A549 (cell line): ENCODE measurements at regions of chr2 and their contacts with region 1.

Region 1: GRCh38 chr2:46230115-46230571 is 67.1 kb upstream of the EPAS1 start:
- DNase-seq: peak; percentile 35 to 84
- ATAC-seq: peak; percentile 85 to 90
- H3K4me3 ChIP-seq: no peak overlapping the region
- H3K27ac ChIP-seq: peak overlapping the region; percentile 93 to 95
- H3K4me1 ChIP-seq: peaks cover 62% of the 10 kb centered on the region
- CTCF ChIP-seq: peak; percentile 63
- EP300 ChIP-seq: no peak
- POLR2A ChIP-seq: no peak
- RAD21 ChIP-seq: peak; percentile 80 to 87

Region 2: GRCh38 chr2:46134531-46135181 is 95.5 kb before region 1 on chr2:
- CTCF ChIA-PET with region 1: no interaction called
- POLR2A ChIA-PET with region 1: no interaction called
- DNase-seq: no peak
- ATAC-seq: no peak
- H3K4me3 ChIP-seq: no peak overlapping the region
- H3K27ac ChIP-seq: no peak overlapping the region
- H3K4me1 ChIP-seq: peaks cover 6% of the 10 kb centered on the region; the same call in 2 of the 3 replicates
- CTCF ChIP-seq: no peak
- EP300 ChIP-seq: no peak
- POLR2A ChIP-seq: no peak
- RAD21 ChIP-seq: no peak

Region 3: DNA sequence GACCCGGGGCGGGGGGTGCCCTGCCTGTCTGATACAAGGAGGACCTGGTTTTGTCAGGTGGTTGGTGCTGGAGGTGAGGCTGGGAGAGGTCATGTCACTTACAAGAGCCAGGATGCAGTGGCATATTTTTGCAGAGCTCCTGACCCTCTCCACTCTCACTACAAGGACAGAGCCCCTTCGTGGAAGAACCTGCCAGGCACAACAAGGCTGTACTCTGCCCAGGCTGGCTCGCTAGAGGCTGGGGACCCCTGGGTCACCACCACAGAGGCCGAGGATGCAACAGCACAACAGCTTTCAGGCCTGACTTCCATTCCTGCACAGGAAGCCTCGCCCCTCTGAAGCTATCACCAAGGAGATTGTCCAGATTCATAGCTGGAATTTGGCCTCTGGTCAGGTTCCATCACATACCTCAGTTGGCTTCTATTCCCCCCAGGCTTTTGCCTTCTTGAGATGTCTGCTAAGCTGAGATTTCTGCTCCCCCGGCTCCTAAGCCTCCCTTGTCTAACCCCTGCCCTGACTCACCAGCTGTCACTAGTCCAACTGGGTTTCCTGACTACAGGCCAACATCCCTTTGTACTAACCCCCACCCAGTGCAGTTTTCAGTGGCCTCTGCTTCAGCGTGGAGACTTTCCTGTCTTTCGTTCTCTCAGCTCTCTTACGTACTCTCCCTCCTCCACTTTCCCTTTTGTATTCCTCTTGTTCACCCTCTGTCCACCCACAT is 65.4 kb before region 1 on chr2:
- CTCF ChIA-PET with region 1: interaction called, 17 read pairs
- POLR2A ChIA-PET with region 1: no interaction called
- DNase-seq: peak; percentile 88 to 91
- ATAC-seq: peak; percentile 65 to 81
- H3K4me3 ChIP-seq: peak overlapping the region; percentile 1; the same call in 1 of the 3 replicates
- H3K27ac ChIP-seq: peak overlapping the region; percentile 85 to 89
- H3K4me1 ChIP-seq: peaks cover 77% of the 10 kb centered on the region
- CTCF ChIP-seq: no peak
- EP300 ChIP-seq: peak in 1 of 2 experiments; percentile 51; a peak in 2 of 5 replicates
- POLR2A ChIP-seq: no peak
- RAD21 ChIP-seq: peak in 1 of 2 experiments; percentile 42; a peak in 4 of 5 replicates

Region 4: DNA sequence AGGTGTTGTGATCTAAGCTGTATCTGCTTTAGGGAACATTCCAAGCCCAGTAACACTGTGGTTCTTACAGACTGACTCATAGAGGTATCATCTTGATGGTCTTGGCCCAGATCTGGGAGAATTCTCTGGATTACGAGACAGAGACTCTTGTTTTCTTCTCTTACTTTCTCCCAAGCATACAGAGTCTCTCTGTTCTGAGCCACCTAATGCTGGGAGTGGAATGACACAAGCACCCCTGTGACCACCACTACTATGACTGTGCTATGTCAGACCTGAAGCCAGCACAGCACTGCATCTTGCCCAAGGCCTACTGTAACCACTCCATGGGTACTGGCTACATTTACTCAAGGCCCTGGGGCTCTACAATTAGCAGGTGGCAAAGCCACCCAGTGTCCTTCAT is 13.9 kb before region 1 on chr2:
- CTCF ChIA-PET with region 1: interaction called, 24 read pairs
- POLR2A ChIA-PET with region 1: no interaction called
- DNase-seq: no peak
- ATAC-seq: no peak
- H3K4me3 ChIP-seq: no peak overlapping the region
- H3K27ac ChIP-seq: no peak overlapping the region
- H3K4me1 ChIP-seq: no peaks in the 10 kb centered on the region
- CTCF ChIP-seq: no peak
- EP300 ChIP-seq: no peak
- POLR2A ChIP-seq: no peak
- RAD21 ChIP-seq: no peak

Region 5: GRCh38 chr2:46329803-46330775 is 99.9 kb after region 1 on chr2:
- CTCF ChIA-PET with region 1: interaction called, 11 read pairs
- POLR2A ChIA-PET with region 1: interaction called, 5 read pairs
- DNase-seq: peak; percentile 66 to 86
- ATAC-seq: peak; percentile 66 to 76
- H3K4me3 ChIP-seq: peak overlapping the region; percentile 12; the same call in 1 of the 3 replicates
- H3K27ac ChIP-seq: peak overlapping the region; percentile 88 to 89
- H3K4me1 ChIP-seq: peaks cover 99% of the 10 kb centered on the region
- CTCF ChIP-seq: no peak
- EP300 ChIP-seq: peak; percentile 71 to 81; a peak in 3 of 5 replicates
- POLR2A ChIP-seq: no peak
- RAD21 ChIP-seq: peak in 1 of 2 experiments; percentile 42; a peak in 1 of 5 replicates